ENCODE measurements at regions of chr7 and their contacts with region 1.

Region 1: GRCh38 chr7:29921404-29922010 is 68.1 kb downstream of the SCRN1 start:
- DNase-seq: no peak
- H3K4me3 ChIP-seq: no peak overlapping the region
- H3K27ac ChIP-seq: no peak overlapping the region
- H3K4me1 ChIP-seq: no peaks in the 10 kb centered on the region
- H3K27me3 ChIP-seq: no peaks in the 10 kb centered on the region
- CTCF ChIP-seq: peak; percentile 91

Region 2: DNA sequence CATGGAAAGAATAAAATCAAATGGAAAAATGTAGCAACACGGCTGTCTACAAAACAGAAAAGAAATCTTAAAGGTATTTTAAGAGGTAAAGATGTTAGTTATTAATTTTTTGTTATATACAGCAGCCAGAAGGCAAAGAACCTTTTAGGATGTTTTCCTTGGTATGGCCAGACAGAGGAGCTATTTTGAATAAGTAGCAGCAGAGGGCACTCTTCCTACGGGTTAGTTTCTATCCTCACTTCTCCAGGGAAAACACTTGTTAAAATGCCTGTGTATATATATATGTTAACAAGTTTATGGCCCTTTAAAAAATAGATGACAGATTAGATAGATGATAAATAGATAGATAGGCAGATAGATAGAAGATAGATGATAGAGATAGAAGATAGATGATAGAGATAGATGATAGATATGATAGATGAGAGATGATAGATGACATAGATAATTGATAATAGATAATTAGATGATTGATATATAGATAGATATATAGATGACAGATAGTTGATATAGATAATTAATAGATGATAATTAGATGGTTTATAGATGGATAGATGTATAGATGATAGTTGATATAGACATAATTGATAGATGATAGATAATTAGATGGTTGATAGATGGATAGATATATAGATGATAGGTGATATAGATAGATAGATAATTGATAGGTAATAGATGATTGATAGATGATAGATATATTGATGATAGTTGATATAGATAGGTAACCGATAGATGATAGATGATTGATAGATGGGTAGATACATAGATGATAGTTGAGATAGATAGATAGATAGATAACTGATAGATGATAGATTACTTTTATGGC is 173.0 kb before region 1 on chr7:
- intact Hi-C with region 1: loop called (anchors 10 kb)
- DNase-seq: no peak
- H3K4me3 ChIP-seq: no peak overlapping the region
- H3K27ac ChIP-seq: peak overlapping the region; percentile 64
- H3K4me1 ChIP-seq: peaks cover 9% of the 10 kb centered on the region
- H3K27me3 ChIP-seq: no peaks in the 10 kb centered on the region
- CTCF ChIP-seq: peak; percentile 73

Region 3: DNA sequence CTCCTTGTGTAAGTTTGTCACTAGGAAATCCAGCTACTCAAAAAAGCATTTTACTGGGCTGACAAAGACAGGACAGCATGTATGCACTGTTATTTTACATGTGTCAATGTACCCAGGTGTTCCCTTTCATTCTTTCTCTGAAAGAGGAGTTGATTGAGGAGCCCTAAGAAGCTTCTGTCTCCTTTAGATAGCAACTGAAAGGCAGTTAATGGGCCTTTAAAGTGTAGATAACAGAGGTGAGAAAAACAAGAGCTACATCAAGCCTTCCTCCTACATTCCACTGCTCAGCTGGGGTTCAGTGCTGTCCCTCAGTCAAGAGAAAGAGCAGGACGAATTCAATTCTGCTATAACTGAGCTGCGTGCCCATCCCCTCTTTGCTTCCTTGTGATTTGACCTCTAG is 128.0 kb before region 1 on chr7:
- intact Hi-C with region 1: no loop called
- DNase-seq: no peak
- H3K4me3 ChIP-seq: no peak overlapping the region
- H3K27ac ChIP-seq: no peak overlapping the region
- H3K4me1 ChIP-seq: no peaks in the 10 kb centered on the region
- H3K27me3 ChIP-seq: no peaks in the 10 kb centered on the region
- CTCF ChIP-seq: no peak

Region 4: DNA sequence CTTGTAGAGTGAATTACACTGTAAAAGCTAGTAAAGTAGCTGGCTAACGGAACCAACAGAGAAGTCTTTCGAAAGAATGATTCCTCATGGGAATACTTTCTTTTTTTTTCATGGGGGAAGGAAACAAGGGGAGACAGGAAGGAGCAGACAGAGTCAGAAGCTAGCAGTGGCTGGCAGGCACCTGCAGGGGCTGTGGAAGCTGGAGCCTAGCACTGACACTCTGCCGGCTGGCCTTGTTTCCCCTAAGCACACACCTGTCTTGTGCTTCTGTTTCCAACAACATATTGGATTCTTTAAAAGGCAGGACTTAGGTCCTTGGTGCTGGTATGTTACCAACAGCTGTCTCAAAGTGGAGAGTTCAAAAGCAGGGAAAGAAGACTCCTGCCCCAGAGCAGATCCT is 532.4 kb after region 1 on chr7:
- intact Hi-C with region 1: no loop called
- DNase-seq: no peak
- H3K4me3 ChIP-seq: no peak overlapping the region
- H3K27ac ChIP-seq: peak overlapping the region; percentile 45
- H3K4me1 ChIP-seq: peaks cover 47% of the 10 kb centered on the region
- H3K27me3 ChIP-seq: no peaks in the 10 kb centered on the region
- CTCF ChIP-seq: peak; percentile 33